ENCODE measurements at regions of chr10 and their contacts with region 1.

Region 1: DNA sequence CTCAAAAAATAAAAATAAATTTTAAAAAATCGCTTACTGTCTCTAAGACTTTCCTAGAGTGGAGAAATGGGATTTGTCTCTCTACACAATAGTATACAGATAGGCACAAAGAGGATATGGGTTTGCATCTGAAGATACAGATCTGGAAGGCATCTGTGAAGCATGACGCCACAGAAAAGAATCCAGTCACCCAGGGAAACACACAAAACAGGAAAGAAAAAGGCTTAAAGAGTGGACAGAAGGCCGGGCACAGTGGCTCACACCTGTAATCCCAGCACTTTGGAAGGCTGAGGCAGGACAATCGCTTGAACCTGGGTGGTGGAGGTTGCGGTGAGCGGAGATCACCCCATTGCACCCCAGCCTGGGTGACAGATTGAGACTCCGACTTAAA is 61.3 kb downstream of the SKIDA1 start:
- DNase-seq: peak; percentile 61 to 67
- H3K4me3 ChIP-seq: no peak overlapping the region
- H3K27ac ChIP-seq: no peak overlapping the region
- H3K4me1 ChIP-seq: no peaks in the 10 kb centered on the region
- H3K27me3 ChIP-seq: no peaks in the 10 kb centered on the region
- CTCF ChIP-seq: no peak

Region 2: DNA sequence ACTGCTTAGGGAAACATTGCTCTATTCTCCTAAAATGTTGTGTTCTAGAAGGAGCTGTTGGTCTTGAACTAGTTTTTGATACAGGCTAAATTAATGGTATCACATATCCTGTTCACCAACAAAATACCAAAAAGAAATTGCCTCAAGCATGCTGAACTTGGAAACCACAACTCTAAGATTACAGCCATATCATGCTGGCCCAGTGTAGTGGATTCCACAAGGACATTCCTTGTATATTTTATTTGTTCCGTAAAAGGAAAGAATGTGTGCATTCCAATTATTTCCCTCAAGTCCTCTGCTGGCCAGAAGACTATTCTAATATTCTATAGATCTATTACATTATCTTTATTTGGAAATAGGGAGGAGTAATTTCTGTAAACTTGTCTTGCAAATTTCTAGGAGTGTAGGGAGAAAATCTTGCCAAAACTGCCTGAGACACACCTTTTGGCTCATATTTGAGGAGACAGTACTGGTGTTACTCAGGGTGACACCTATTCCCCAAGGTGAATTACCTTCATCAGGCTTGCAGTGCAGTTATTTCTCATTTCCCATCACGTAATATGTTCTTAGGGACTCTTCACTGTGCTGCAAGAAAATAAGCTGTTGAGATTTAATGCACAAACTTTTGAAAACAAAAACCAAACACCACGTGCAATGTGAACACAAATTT is 565.1 kb before region 1 on chr10:
- CTCF ChIA-PET with region 1: no interaction called
- POLR2A ChIA-PET with region 1: no interaction called
- intact Hi-C with region 1: no loop called
- DNase-seq: no peak
- H3K4me3 ChIP-seq: no peak overlapping the region
- H3K27ac ChIP-seq: no peak overlapping the region
- H3K4me1 ChIP-seq: no peaks in the 10 kb centered on the region
- H3K27me3 ChIP-seq: no peaks in the 10 kb centered on the region
- CTCF ChIP-seq: no peak

Region 3: DNA sequence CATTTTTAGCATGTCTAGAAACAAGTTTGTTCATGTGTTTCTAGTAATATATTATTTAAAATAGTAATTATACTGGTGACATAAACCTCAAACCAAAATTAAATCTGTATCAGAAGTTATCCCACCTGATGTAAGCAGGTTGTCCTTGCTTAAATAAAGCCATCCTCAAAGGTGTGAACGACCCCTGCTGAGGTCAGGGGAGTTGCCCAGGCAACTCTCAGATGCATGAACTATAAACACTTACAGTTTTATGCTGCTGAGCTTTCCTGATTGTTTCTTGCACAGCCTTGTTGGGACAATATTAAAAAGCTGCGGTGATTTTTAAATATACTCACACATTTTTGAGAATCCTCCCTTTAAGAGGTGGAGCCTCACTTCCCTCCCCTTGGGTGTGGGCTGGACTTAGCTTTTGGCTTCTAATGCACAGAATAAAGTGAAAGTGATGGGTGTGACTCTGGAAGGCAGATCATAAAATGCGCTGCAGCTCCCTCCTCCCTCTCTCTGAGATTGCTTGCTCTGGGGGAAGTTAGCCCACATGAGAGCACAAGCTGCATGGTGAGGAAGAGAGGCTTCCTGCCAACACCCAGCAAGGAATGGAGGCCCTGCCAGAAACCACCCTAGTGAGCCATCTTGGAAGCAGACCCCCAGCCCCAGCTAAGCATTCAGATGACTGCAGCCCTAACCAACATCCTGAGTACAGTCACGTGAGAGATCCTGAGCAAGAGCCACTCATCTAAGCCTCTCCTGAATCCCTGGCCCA is 91.3 kb before region 1 on chr10:
- CTCF ChIA-PET with region 1: no interaction called
- POLR2A ChIA-PET with region 1: interaction called, 10 read pairs
- intact Hi-C with region 1: no loop called
- DNase-seq: peak; percentile 62 to 78
- H3K4me3 ChIP-seq: peak overlapping the region; percentile 43; the same call in 1 of the 2 replicates
- H3K27ac ChIP-seq: peak overlapping the region; percentile 34; the same call in 1 of the 2 replicates
- H3K4me1 ChIP-seq: peaks cover 17% of the 10 kb centered on the region; the same call in 1 of the 2 replicates
- H3K27me3 ChIP-seq: no peaks in the 10 kb centered on the region
- CTCF ChIP-seq: no peak

Region 4: GRCh38 chr10:21437770-21438382 is 26.3 kb before region 1 on chr10:
- CTCF ChIA-PET with region 1: interaction called, 11 read pairs
- POLR2A ChIA-PET with region 1: no interaction called
- intact Hi-C with region 1: no loop called
- DNase-seq: no peak
- H3K4me3 ChIP-seq: no peak overlapping the region
- H3K27ac ChIP-seq: no peak overlapping the region
- H3K4me1 ChIP-seq: peaks cover 5% of the 10 kb centered on the region
- H3K27me3 ChIP-seq: no peaks in the 10 kb centered on the region
- CTCF ChIP-seq: no peak

Measured in PC-9 (cell line).